GM12878 (cell line): ENCODE measurements at regions of chr2 and their contacts with region 1.

Region 1: DNA sequence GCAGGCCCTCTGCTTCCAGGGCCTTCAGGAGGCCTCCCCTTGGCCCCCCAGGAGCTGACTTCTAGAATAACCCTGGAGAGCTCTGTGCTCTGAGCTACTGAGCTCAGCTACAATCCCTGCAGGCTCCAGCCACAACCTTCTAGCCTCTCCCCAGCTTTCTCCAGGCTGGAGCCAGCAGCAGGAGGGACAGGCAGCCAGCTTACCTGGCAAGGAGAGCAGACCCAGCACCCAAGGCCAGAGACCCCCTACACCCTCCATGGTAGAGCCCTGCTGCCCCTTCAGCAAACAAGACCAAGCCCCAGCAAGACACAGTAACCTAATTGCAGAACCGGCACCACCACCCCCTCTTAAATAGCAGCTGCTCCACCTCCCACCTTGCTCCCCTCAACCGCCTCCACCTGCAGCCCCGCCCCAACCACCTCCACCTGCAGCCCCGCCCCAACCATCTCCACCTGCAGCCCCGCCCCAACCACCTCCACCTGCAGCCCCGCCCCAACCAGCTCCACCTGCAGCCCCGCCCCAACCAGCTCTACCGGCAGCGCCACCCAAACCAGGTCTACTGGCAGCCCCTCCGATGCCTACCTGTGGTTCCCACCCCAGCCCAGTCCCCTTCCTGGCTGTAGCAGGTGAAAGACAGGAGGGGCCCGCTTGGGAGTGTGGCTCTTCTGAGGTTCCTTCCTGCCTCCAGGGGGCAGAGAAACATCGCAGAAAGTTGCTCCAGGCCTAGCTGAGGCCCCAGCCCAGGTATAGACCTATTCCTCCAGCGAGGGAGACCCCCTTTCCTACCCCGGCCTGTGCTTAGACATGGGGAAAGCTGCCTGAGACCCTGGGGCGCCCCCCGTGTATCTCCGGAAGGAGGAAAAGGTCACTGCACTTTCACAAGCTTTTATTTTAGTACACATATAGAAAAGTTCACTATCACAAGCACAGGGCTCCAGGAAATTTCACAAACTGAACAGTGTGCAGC is at the start of gene ASTL:
- DNase-seq: no peak
- ATAC-seq: peak; percentile 37
- H3K4me3 ChIP-seq: no peak within 1 kb of the TSS
- H3K27ac ChIP-seq: no peak within 1 kb of the TSS
- H3K4me1 ChIP-seq: peaks cover 13% of the 10 kb centered on the region
- H3K27me3 ChIP-seq: no peaks in the 10 kb centered on the region; a peak in 1 of 4 replicates
- CTCF ChIP-seq: peak; percentile 67 to 92 (median 71)
- EP300 ChIP-seq: no peak
- POLR2A ChIP-seq: no peak
- RAD21 ChIP-seq: peak; percentile 92
- polyA plus RNA-seq, gene ASTL: not detected

Region 2: DNA sequence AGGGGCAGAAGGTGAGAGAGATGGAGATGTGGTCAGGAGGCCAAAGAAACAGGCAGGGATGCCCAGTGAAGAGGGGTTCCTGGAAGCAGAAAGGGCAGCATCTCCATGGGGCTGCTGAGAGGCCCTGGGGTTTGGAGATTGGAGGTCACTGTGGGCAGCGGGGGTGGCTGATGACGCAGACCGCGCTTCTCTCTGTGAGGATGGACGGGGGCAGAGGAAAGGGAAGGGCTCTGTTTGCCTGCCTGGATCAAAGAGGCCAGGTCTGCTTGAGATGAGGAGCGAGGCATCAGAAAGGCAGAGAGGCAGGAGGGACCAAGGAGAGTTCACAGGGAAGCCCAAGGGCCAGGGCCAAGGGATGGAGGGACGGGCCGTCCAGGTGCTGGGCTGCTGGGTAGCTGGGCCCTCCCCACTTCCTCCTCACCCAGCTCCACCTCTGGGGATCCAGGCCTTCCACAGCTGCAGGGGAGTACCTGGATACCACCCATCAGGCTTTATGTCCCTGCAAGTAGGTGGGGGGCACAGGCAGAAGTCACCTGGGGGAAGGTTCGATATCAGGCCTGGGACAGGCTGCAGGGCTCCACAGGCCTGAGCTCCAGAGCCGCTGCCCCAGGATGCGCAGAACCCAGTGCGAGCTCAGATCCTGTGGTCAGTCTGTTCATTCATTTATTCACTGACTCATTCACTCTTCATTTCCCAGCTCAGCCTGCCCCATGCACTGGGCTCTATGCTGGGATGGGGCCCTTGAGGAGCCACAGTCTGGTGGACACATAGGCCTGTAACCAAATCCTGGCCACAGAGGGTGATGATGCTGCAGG is 52.7 kb before region 1 on chr2:
- CTCF ChIA-PET with region 1: no interaction called
- POLR2A ChIA-PET with region 1: no interaction called
- RAD21 ChIA-PET with region 1: no interaction called
- SMC1A ChIA-PET with region 1: no interaction called
- in situ Hi-C with region 1: no loop called
- intact Hi-C with region 1: no loop called
- DNase-seq: no peak
- ATAC-seq: no peak
- H3K4me3 ChIP-seq: no peak overlapping the region
- H3K27ac ChIP-seq: no peak overlapping the region
- H3K4me1 ChIP-seq: no peaks in the 10 kb centered on the region
- H3K27me3 ChIP-seq: no peaks in the 10 kb centered on the region; a peak in 1 of 4 replicates
- CTCF ChIP-seq: no peak
- EP300 ChIP-seq: no peak
- POLR2A ChIP-seq: no peak
- RAD21 ChIP-seq: no peak

Region 3: DNA sequence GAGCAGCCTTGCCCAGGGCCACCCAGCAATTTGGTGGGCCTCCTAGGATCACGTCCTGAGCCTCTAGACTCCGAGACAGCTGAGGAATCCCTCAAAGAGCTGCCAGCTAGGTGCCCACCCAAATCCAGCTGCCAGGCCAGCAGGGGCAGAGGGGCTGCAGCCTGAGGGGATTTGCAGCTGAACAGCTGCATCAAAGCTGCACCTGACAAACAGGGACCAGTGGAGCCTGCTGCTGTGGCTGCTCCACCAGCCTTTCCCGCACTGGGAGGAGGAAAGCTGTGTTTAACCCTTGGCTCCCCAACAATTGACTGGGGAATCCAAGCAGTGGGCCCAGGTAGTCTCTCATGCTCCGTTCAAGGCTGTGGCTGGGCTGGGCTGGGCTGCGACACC is 30.3 kb before region 1 on chr2:
- CTCF ChIA-PET with region 1: no interaction called
- POLR2A ChIA-PET with region 1: no interaction called
- RAD21 ChIA-PET with region 1: no interaction called
- SMC1A ChIA-PET with region 1: no interaction called
- in situ Hi-C with region 1: no loop called
- intact Hi-C with region 1: no loop called
- DNase-seq: no peak
- ATAC-seq: no peak
- H3K4me3 ChIP-seq: no peak overlapping the region
- H3K27ac ChIP-seq: no peak overlapping the region
- H3K4me1 ChIP-seq: no peaks in the 10 kb centered on the region
- H3K27me3 ChIP-seq: no peaks in the 10 kb centered on the region
- CTCF ChIP-seq: no peak
- EP300 ChIP-seq: no peak
- POLR2A ChIP-seq: no peak
- RAD21 ChIP-seq: no peak

Region 4: GRCh38 chr2:96157651-96158553 is 19.4 kb after region 1 on chr2:
- CTCF ChIA-PET with region 1: interaction called, 68 read pairs
- POLR2A ChIA-PET with region 1: interaction called, 161 read pairs
- RAD21 ChIA-PET with region 1: interaction called, 182 read pairs
- SMC1A ChIA-PET with region 1: interaction called, 139 read pairs
- in situ Hi-C with region 1: no loop called
- intact Hi-C with region 1: no loop called
- DNase-seq: peak; percentile 76
- ATAC-seq: peak; percentile 80
- H3K4me3 ChIP-seq: peak overlapping the region; percentile 21; the same call in 1 of the 2 replicates
- H3K27ac ChIP-seq: peak overlapping the region; percentile 95
- H3K4me1 ChIP-seq: peaks cover 60% of the 10 kb centered on the region
- H3K27me3 ChIP-seq: no peaks in the 10 kb centered on the region
- CTCF ChIP-seq: no peak
- EP300 ChIP-seq: peak; percentile 93 to 95
- POLR2A ChIP-seq: peak; percentile 80
- RAD21 ChIP-seq: peak; percentile 22; the same call in 1 of the 2 replicates

Region 5: DNA sequence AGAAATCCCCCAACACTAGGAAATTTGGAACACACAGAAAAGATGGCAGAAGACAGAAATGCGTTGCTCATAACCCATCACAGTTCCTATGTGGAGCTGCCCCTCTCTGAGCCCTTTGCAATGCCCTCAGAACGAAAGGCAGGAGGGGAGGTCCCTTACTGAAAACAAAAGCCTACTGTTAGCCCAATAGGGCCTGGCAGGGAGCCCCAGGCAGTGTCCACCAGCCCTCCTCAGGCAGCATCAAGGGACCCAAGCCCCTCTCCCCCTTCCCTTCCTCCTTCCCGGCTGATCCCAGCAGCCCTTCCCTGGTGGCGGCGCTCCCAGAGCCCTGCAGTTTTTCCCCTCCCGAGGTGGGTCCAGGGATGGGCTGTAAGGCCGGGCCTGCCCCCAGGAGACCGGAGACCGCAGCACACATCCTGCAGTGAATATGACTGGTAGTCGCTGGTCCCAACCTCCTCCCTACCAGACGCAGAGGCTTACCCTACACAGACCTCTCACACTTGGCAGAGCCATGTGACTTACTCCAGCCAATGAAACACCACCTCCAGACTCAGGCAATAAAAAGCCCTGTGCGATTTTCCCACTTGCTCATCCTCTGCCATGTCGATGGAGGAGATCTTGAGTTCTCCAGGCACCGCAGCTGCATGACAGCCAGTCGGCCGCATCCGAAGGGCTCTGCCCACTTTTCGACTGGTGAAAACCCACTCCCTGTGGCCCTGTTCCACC is 26.2 kb after region 1 on chr2:
- CTCF ChIA-PET with region 1: interaction called, 535 read pairs
- POLR2A ChIA-PET with region 1: interaction called, 161 read pairs
- RAD21 ChIA-PET with region 1: interaction called, 182 read pairs
- SMC1A ChIA-PET with region 1: interaction called, 338 read pairs
- in situ Hi-C with region 1: no loop called
- intact Hi-C with region 1: no loop called
- DNase-seq: peak; percentile 96
- ATAC-seq: peak; percentile 85
- H3K4me3 ChIP-seq: peak overlapping the region; percentile 65
- H3K27ac ChIP-seq: peak overlapping the region; percentile 100
- H3K4me1 ChIP-seq: peaks cover 51% of the 10 kb centered on the region
- H3K27me3 ChIP-seq: no peaks in the 10 kb centered on the region
- CTCF ChIP-seq: peak in 1 of 3 experiments; percentile 11; a peak in 2 of 6 replicates
- EP300 ChIP-seq: no peak; a peak in 1 of 4 replicates
- POLR2A ChIP-seq: peak; percentile 86
- RAD21 ChIP-seq: peak; percentile 16; the same call in 1 of the 2 replicates

Region 6: GRCh38 chr2:96180521-96180920 is 42.1 kb after region 1 on chr2:
- CTCF ChIA-PET with region 1: interaction called, 535 read pairs
- POLR2A ChIA-PET with region 1: interaction called, 35 read pairs
- RAD21 ChIA-PET with region 1: interaction called, 463 read pairs
- SMC1A ChIA-PET with region 1: interaction called, 338 read pairs
- in situ Hi-C with region 1: loop called (anchors 5 kb)
- intact Hi-C with region 1: no loop called
- DNase-seq: no peak
- ATAC-seq: no peak
- H3K4me3 ChIP-seq: no peak overlapping the region
- H3K27ac ChIP-seq: no peak overlapping the region
- H3K4me1 ChIP-seq: peaks cover 6% of the 10 kb centered on the region
- H3K27me3 ChIP-seq: no peaks in the 10 kb centered on the region
- CTCF ChIP-seq: no peak
- EP300 ChIP-seq: no peak
- POLR2A ChIP-seq: no peak
- RAD21 ChIP-seq: no peak

Region 7: GRCh38 chr2:96233880-96234316 is 95.4 kb after region 1 on chr2:
- CTCF ChIA-PET with region 1: interaction called, 12 read pairs
- POLR2A ChIA-PET with region 1: no interaction called
- RAD21 ChIA-PET with region 1: interaction called, 11 read pairs
- SMC1A ChIA-PET with region 1: interaction called, 7 read pairs
- in situ Hi-C with region 1: no loop called
- intact Hi-C with region 1: no loop called
- DNase-seq: peak; percentile 68
- ATAC-seq: peak; percentile 99
- H3K4me3 ChIP-seq: no peak overlapping the region
- H3K27ac ChIP-seq: peak overlapping the region; percentile 50
- H3K4me1 ChIP-seq: peaks cover 21% of the 10 kb centered on the region
- H3K27me3 ChIP-seq: no peaks in the 10 kb centered on the region
- CTCF ChIP-seq: peak; percentile 44 to 51 (median 46); a peak in 5 of 6 replicates
- EP300 ChIP-seq: peak in 1 of 2 experiments; percentile 51; a peak in 1 of 4 replicates
- POLR2A ChIP-seq: no peak
- RAD21 ChIP-seq: peak; percentile 48